Lower leg skin (tissue), 4 donors: ENCODE measurements at regions of chr9 and their contacts with region 1.

Region 1: GRCh38 chr9:72038890-72039410 is 21.5 kb downstream of the C9orf57 start:
- DNase-seq: peak; percentile 80 to 94
- H3K4me3 ChIP-seq: no peak overlapping the region
- CTCF ChIP-seq: peak in 1 of 3 donors; percentile 72
- POLR2A ChIP-seq: no peak

Region 2: DNA sequence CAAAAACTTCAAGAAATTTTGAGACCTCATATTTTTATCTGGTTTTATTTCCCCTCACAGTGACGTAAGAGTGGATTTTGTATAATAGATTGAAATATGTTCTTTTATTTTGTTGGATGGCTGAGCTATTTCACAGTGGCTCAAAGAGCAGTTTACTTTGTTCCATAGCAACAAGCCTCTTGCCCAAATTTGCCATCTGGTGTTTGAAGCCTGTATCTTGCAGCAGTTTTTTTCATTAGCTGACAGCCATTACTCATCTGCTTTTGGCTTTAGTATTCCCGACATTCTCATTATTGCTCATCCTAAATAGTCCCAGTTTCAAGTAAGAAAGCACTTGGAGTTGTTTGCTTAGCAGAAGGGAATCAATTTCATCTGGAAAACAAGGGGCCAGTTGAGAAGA is 146.6 kb after region 1 on chr9:
- intact Hi-C with region 1: no loop called
- DNase-seq: no peak
- H3K4me3 ChIP-seq: no peak overlapping the region
- CTCF ChIP-seq: no peak
- POLR2A ChIP-seq: no peak

Region 3: DNA sequence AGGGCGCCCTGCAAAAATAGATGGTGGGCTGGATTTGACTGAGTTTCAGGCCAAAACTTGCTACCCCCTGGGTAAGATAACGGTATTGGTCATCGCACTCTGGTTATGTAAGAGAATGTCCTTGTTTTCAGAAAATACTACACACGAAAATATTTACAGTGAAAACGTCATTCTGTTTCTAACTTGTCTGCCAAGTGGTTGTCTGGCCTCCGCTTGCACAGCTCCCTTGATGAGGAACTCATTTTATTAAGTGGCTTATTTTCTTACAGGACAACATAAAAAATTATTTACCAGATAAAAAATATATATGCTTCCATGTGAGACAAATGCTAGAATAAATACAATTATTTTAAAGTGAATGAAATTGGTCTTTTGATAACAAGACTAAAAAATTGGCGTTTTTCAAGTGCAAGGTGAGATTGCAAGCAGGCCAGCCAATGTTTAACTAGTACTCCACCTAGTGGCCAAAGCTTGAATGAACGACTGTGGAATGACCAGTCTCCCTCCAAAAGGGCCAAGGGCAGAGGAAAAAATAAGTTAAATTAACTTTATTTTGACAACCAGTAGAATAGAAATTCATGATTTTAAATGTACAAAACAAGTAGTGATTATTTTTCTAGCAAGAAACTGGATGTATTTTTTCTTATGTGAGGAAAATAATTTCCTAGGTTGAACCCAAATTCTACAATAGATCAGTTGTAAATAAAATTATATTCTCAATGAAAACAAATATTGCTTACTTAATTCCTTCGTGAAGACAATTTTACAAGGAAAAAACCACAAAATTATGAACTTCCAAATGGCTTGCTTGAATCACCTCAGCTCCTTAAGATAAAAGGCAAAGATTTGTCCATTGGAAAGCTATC is 232.9 kb after region 1 on chr9:
- intact Hi-C with region 1: loop called (anchors 5 kb)
- DNase-seq: peak in 1 of 2 donors; percentile 54
- H3K4me3 ChIP-seq: no peak overlapping the region
- CTCF ChIP-seq: peak in 1 of 3 donors; percentile 18
- POLR2A ChIP-seq: no peak